ENCODE measurements at regions of chr11 and their contacts with region 1.

Region 1: GRCh38 chr11:62081378-62082291 is 42.2 kb upstream of the INCENP start:
- DNase-seq: peak; percentile 76
- H3K4me3 ChIP-seq: no peak overlapping the region
- H3K27ac ChIP-seq: no peak overlapping the region
- H3K4me1 ChIP-seq: peaks cover 0 to 5% of the 10 kb centered on the region in 2 experiments; a peak in 1 of 4 replicates
- H3K27me3 ChIP-seq: no peaks in the 10 kb centered on the region
- CTCF ChIP-seq: peak; percentile 94
- EP300 ChIP-seq: no peak
- RAD21 ChIP-seq: peak; percentile 98

Region 2: GRCh38 chr11:61879711-61880430 is 201.8 kb before region 1 on chr11:
- CTCF ChIA-PET with region 1: interaction called, 22 read pairs
- POLR2A ChIA-PET with region 1: no interaction called
- DNase-seq: no peak
- H3K4me3 ChIP-seq: no peak overlapping the region
- H3K27ac ChIP-seq: no peak overlapping the region
- H3K4me1 ChIP-seq: peaks cover 0 to 4% of the 10 kb centered on the region in 2 experiments; a peak in 1 of 4 replicates
- H3K27me3 ChIP-seq: no peaks in the 10 kb centered on the region
- CTCF ChIP-seq: no peak
- EP300 ChIP-seq: no peak
- RAD21 ChIP-seq: no peak

Region 3: GRCh38 chr11:61908730-61909315 is 172.8 kb before region 1 on chr11:
- CTCF ChIA-PET with region 1: interaction called, 357 read pairs
- POLR2A ChIA-PET with region 1: no interaction called
- DNase-seq: no peak
- H3K4me3 ChIP-seq: no peak overlapping the region
- H3K27ac ChIP-seq: no peak overlapping the region
- H3K4me1 ChIP-seq: no peaks in the 10 kb centered on the region
- H3K27me3 ChIP-seq: no peaks in the 10 kb centered on the region
- CTCF ChIP-seq: no peak
- EP300 ChIP-seq: no peak
- RAD21 ChIP-seq: no peak

Region 4: DNA sequence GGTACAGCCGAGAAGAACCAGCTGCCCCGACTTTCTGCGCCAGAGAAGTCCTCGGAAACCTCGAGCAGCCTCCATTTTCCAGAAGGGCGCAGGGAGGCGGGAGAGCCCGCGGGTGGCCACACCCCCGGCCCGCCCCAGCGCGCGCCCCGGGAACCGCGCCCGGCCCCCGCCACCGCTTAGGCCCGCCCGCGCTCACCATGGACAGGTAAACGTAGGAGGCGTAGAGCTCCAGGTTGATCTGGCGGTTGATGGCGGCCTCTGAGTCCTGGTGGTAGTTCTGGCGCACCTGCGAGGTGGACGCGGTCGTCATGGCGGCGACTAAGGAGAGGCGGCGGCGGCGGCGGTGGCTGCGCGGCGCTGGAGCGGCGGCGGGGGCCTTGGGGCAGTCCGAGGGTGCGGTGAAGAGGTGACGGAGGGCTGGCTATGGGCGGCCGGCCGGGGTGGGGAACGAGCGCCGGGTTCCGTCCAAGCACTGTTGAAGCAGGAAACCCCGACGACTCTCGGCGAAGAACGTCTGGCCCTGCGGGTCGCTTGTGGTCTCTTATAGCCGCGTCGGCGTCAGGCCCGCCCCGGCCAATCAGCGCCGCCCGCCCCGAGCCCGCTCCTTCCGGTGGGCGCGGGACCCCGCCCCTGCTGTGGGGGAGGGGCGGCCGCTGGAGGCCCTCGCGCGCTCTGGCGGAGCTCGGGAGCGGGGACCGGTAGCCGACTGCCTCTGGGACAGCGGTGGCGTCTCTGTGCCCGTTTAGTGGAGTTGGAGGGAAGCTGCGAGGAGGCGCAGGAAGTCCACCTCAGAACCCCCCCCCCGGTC is 114.3 kb before region 1 on chr11 and contains the start of gene FTH1:
- CTCF ChIA-PET with region 1: interaction called, 46 read pairs
- POLR2A ChIA-PET with region 1: interaction called, 15 read pairs
- DNase-seq: peak; percentile 99
- H3K4me3 ChIP-seq: peak within 1 kb of the TSS; percentile 99
- H3K27ac ChIP-seq: peak within 1 kb of the TSS; percentile 94 to 97
- H3K4me1 ChIP-seq: peaks cover 43 to 52% of the 10 kb centered on the region in 2 experiments
- H3K27me3 ChIP-seq: no peaks in the 10 kb centered on the region
- CTCF ChIP-seq: no peak
- EP300 ChIP-seq: peak; percentile 8 to 29; a peak in 2 of 4 replicates
- RAD21 ChIP-seq: no peak
- polyA plus RNA-seq, gene FTH1: 879 and 1,229 TPM in 2 replicates

Region 5: GRCh38 chr11:62044639-62045121 is 37.0 kb before region 1 on chr11:
- CTCF ChIA-PET with region 1: interaction called, 31 read pairs
- POLR2A ChIA-PET with region 1: no interaction called
- DNase-seq: no peak
- H3K4me3 ChIP-seq: no peak overlapping the region
- H3K27ac ChIP-seq: no peak overlapping the region
- H3K4me1 ChIP-seq: no peaks in the 10 kb centered on the region
- H3K27me3 ChIP-seq: no peaks in the 10 kb centered on the region; the same call in 1 of the 2 replicates
- CTCF ChIP-seq: no peak
- EP300 ChIP-seq: no peak
- RAD21 ChIP-seq: no peak

Region 6: DNA sequence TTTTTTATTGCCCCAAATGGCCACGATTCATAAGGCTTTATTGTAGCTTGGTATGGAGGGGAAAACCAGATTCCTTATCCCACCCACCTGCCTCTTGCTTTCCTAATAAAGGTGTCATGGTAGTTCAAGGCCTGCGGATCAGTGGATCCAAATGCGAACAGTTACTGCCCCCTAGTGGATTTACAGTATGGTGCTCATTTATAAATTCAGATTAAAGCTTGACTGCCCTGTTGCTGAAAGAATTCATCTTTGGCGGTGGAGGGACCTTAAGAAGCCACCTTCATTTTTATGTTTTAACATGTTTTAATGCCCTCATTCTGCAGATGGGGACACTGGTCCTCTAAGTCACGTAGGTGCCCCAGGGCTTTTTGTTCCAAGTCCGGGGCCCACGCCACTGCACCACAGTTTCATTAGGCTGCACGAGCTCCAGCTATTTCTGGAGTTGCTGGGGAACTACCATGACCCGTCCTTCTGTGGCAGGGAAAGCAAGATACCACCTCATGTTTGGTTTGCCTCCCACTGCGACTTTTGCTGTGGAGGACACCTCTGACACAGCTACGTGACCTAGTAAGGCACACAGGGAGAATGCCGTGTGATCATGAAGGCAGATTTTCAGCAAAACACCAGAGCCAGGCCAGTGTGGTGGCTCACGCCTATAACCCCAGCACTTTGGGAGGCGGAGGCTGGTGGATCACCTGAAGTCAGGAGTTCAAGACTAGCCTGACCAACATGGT is 26.5 kb after region 1 on chr11:
- CTCF ChIA-PET with region 1: interaction called, 67 read pairs
- POLR2A ChIA-PET with region 1: interaction called, 5 read pairs
- DNase-seq: peak; percentile 69
- H3K4me3 ChIP-seq: no peak overlapping the region; a peak in 1 of 4 replicates
- H3K27ac ChIP-seq: no peak overlapping the region
- H3K4me1 ChIP-seq: peaks cover 0 to 3% of the 10 kb centered on the region in 2 experiments; a peak in 1 of 4 replicates
- H3K27me3 ChIP-seq: no peaks in the 10 kb centered on the region
- CTCF ChIP-seq: peak; percentile 87
- EP300 ChIP-seq: no peak
- RAD21 ChIP-seq: peak; percentile 92